ENCODE measurements at regions of chr2 and their contacts with region 1.

Region 1: GRCh38 chr2:119366649-119367471 is at the starts of genes C2orf76 and DBI:
- DNase-seq: peak; percentile 93
- H3K4me3 Mint-ChIP-seq: peak within 1 kb of the TSS; percentile 99
- H3K27ac Mint-ChIP-seq: peak within 1 kb of the TSS; percentile 99
- H3K4me1 Mint-ChIP-seq: peaks cover 46% of the 10 kb centered on the region
- H3K27me3 Mint-ChIP-seq: no peaks in the 10 kb centered on the region
- total RNA-seq, gene C2orf76: 10.3 and 10.7 TPM in 2 replicates
- total RNA-seq, gene DBI: 142 and 146 TPM in 2 replicates

Region 2: DNA sequence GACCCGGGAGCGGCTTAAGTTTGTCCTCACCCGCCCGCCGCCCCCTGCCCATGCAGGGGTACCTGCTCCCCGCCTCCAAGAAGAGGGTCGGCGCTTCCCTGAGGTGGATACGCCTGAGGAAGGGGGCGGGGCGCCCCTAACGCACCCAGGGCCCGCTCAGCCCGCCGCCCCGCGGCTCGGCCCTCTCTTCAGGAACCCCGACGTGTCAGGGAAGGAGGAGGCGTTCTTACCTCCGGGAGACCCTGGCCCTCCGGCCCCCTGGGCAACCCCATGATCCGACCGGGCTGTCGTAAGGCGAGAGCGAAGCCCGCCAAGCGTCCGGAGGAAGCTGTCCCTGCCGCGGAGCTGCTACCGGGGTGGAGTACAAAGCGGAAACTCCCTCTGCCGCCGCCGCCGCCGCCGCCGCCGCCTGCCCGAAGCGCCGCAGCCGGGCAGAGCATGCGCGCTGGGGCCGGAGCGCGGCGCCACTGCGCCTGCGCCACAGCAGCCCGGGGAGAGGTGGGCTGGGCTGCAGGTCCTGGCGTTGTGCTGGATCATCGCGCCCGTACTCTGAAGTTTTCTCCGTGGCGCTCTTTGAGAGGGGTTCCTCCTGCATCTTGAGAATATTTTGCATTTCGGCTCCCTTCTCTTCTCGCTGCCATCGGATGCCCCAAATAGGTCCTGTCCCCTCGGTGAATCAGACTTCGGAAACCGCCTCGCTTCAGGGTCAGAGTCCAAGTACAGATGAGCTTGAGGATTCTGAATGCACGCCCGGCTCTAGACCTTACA is 1353.0 kb before region 1 on chr2 and contains the start of gene CCDC93:
- intact Hi-C with region 1: loop called (anchors 2 kb)
- DNase-seq: peak; percentile 87
- H3K4me3 Mint-ChIP-seq: peak within 1 kb of the TSS; percentile 92
- H3K27ac Mint-ChIP-seq: peak within 1 kb of the TSS; percentile 88
- H3K4me1 Mint-ChIP-seq: peaks cover 42% of the 10 kb centered on the region
- H3K27me3 Mint-ChIP-seq: no peaks in the 10 kb centered on the region
- total RNA-seq, gene CCDC93: 33.3 and 34.4 TPM in 2 replicates

Region 3: DNA sequence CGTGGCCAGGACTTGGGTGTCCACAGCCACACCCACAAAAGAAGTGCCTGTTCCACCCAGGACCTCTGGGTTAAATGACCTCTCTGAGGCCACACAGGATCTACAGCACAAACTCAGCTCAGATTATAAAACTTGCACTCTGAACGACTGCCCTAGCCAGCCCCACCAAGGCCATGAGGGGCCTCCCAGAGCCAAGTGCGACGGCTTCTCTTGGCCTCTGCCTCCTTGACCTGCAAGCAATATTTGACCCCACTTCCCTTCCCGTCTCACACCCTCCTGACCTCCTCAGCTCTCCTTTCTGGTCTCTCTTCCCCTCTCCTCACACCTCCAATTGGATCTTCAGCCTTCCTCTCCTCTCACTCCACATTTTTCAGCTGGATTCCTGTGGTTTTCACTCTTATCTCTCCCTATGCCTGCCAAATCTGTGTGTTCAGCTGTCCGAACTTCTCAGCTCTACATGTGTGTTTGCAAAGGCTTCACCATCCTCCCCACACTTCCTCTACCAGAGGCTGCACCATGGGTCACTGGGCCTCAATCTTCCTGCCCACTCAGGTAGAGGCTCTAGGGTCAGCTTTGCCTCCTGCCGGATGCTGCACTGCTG is 168.5 kb before region 1 on chr2:
- intact Hi-C with region 1: no loop called
- DNase-seq: no peak
- H3K4me3 Mint-ChIP-seq: no peak overlapping the region
- H3K27ac Mint-ChIP-seq: no peak overlapping the region
- H3K4me1 Mint-ChIP-seq: no peaks in the 10 kb centered on the region
- H3K27me3 Mint-ChIP-seq: peaks cover 7% of the 10 kb centered on the region

Region 4: GRCh38 chr2:119352357-119352756 is 14.5 kb before region 1 on chr2:
- intact Hi-C with region 1: no loop called
- DNase-seq: no peak
- H3K4me3 Mint-ChIP-seq: no peak overlapping the region
- H3K27ac Mint-ChIP-seq: no peak overlapping the region
- H3K4me1 Mint-ChIP-seq: peaks cover 11% of the 10 kb centered on the region
- H3K27me3 Mint-ChIP-seq: peaks cover 6% of the 10 kb centered on the region

Region 5: DNA sequence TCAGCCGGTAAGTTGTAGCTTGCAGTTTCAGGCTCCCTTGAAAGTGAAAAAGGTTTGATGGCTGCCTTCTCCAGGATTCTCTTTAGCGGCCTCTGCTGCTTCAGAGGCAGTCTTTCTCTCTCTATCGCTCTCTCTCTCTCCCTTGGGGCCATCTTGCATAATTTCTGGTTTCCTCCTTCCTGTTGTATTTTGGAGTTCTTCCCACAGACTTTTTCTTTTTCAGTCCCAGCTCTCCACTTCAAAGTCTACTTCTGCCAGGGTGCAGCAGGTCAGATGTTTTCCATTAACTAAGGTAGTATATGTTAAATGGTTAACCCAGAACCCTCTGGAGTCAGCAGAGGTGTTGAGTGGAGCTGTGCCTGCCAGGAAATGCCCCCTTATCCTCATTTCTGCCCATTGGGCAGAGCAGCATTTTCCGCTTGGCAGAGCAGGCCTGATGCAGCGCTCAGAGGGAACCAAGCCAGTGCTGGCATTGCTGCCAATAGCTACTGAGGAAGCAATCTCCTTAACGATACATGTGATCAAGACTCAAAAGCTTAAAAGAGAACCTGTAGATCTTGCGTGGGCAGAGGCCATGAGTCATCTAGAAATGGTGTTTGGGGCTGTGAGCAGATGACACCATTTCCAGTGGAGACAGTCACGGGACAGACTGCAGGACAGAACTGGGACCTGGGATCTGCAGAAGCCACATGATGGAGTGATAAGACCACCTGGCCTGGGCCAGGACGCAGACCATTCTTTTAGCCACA is 20.7 kb after region 1 on chr2:
- intact Hi-C with region 1: loop called (anchors 1 kb)
- DNase-seq: no peak
- H3K4me3 Mint-ChIP-seq: no peak overlapping the region
- H3K27ac Mint-ChIP-seq: peak overlapping the region; percentile 34
- H3K4me1 Mint-ChIP-seq: peaks cover 10% of the 10 kb centered on the region
- H3K27me3 Mint-ChIP-seq: peaks cover 23% of the 10 kb centered on the region

Region 6: DNA sequence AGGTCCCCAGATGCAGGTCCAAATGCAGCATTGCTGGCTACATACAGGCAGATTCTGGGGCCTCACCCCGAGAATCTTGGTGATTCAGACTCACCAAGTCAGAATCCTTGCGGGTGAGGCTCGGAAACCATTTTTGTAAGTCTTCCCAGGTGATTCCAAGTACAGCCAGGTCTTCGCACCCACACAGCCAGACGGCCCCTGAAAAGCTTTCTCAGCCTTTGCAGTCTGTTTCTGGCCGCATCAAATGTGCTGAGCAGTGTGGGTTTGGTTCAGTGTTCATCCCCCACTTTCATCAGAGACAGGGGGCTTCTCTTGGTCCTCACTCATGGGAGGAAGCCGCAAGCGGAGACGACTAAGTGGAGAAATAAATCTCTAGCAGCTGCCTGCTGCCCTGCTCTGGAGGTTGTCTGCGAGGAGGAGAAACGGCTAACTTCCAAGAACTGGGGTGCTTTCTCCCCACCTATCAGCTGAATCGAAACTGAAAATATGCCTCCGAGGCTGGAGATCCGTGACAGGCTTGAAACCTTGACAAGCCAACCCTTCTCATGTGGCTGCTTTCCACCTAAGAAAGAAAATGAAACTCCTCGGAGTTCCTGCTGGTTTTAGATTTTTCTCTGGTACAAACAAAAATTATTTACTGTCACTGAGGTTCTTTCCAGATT is 865.2 kb after region 1 on chr2:
- intact Hi-C with region 1: loop called (anchors 5 kb)
- DNase-seq: peak; percentile 81
- H3K4me3 Mint-ChIP-seq: peak overlapping the region; percentile 91
- H3K27ac Mint-ChIP-seq: peak overlapping the region; percentile 98
- H3K4me1 Mint-ChIP-seq: peaks cover 59% of the 10 kb centered on the region
- H3K27me3 Mint-ChIP-seq: no peaks in the 10 kb centered on the region

Measured in activated T-helper 1 cell treated with anti-CD3 and anti-CD28 coated beads, Interleukin-12 subunit alpha, Interleukin-12 subunit beta, Interleukin-2, Interleukin-4 antibody, amounts not matched to agents 30 ng/mL and 10 ng/mL and 1 ng/mL, durations not matched to agents 14 hours and 24 hours and 36 hours (primary cell).